A549 (cell line): ENCODE measurements at regions of chr11 and their contacts with region 1.

Region 1: DNA sequence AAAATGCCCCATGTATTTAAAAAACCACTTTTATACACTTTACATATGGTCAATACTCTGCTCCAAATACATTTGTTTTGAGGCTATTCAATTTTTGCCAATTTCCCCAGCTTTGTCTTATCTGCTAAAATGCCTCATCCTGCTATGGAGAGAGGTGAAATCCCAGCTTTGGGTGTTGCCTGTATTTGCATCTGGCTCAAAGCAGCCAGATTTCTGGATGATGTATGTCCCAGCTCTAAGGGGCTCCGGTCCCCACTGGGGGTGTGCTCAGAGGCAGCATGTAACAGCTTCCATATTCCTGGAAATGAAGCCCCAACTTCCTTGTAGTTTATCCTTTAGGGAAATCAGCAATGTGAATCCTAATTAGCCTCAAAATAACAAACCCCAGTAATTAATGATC is 59.5 kb downstream of the WT1 start:
- DNase-seq: no peak
- ATAC-seq: no peak
- H3K4me3 ChIP-seq: no peak overlapping the region
- H3K27ac ChIP-seq: no peak overlapping the region
- H3K4me1 ChIP-seq: no peaks in the 10 kb centered on the region
- CTCF ChIP-seq: no peak
- EP300 ChIP-seq: no peak
- POLR2A ChIP-seq: no peak
- RAD21 ChIP-seq: no peak

Region 2: DNA sequence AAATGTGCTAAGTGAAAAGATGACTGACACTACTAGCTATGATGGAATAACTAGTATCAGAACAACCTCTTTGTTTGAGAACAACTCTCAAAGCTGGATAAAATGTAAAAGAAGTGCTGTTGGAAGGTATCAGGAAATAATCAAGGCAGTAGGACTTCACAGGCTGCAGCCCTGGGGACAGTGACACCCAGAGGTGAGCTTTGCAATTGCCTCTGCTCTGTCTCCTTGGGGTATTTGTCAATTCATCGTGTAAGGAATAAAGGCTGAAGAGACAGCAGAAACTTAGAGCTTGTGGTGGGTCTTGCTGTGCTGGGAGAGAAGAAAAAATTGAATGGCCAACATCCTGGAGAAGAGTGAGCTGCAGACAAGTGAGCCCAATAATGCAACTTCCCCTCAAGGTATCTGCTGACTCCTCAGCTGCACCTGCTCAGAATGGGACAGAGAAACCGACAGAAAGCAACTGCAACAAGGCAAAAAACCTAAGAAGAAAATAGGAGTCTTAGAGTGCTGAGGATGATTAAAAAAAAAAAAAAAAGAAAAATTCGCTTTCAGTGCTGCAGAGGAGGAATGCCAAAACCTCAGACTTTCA is 143.8 kb before region 1 on chr11:
- CTCF ChIA-PET with region 1: no interaction called
- POLR2A ChIA-PET with region 1: no interaction called
- DNase-seq: peak; percentile 35 to 53
- ATAC-seq: peak; percentile 89 to 95; a peak in 5 of 6 replicates
- H3K4me3 ChIP-seq: no peak overlapping the region
- H3K27ac ChIP-seq: no peak overlapping the region
- H3K4me1 ChIP-seq: no peaks in the 10 kb centered on the region
- CTCF ChIP-seq: peak; percentile 54
- EP300 ChIP-seq: no peak
- POLR2A ChIP-seq: no peak
- RAD21 ChIP-seq: peak; percentile 43 to 48; a peak in 4 of 5 replicates

Region 3: DNA sequence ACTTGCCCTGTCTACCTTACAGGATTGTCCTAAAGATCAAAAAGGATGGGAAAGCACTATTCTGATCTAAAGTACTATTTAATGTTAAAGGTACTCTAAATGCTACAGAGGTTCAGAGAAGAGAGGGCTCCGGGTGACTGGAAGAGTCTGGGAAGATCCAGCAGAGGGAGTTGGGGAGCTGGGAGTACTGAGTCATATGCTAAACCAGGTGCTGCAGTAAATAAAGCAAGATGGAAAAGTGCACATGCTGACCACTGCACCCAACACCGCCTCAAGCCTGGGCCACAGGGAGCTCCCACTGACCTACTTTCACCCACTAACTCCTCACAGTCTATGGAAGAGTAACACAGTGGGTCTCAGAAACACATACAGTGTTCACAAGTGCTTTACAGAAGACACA is 10.2 kb after region 1 on chr11:
- CTCF ChIA-PET with region 1: interaction called, 11 read pairs
- POLR2A ChIA-PET with region 1: no interaction called
- DNase-seq: peak; percentile 44 to 61
- ATAC-seq: peak; percentile 92 to 95
- H3K4me3 ChIP-seq: no peak overlapping the region
- H3K27ac ChIP-seq: no peak overlapping the region
- H3K4me1 ChIP-seq: no peaks in the 10 kb centered on the region
- CTCF ChIP-seq: peak; percentile 53
- EP300 ChIP-seq: no peak
- POLR2A ChIP-seq: no peak
- RAD21 ChIP-seq: peak; percentile 52 to 53; a peak in 4 of 5 replicates